Ovary (tissue), 10 donors: ENCODE measurements at regions of chr22 and their contacts with region 1.

Region 1: DNA sequence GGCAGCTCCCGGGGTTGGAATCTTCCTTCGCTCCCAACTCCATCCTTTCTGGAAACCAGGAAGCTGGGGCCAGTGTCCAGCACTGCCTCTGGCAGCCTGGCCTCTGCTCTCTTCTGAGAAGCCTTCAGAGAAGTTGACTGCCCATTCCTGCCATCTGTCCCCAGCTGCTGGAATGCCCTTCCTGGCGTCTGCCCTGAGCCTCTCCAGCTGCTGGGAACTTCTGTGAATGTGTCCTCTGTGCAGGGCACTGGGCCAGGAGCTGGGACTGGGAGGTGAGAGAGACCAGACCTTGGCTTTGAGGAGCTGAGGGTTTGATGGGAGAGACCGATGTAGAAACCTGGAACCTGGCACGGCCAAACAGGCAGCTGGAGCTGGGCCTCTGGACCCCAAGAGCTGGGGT is 5.9 kb upstream of the SOX10 start:
- DNase-seq: no peak
- H3K4me3 ChIP-seq: no peak overlapping the region
- H3K27ac ChIP-seq: no peak overlapping the region
- H3K4me1 ChIP-seq: no peaks in the 10 kb centered on the region
- H3K27me3 ChIP-seq: no peaks in the 10 kb centered on the region
- CTCF ChIP-seq: no peak
- EP300 ChIP-seq: no peak
- POLR2A ChIP-seq: no peak

Region 2: GRCh38 chr22:37328017-37328416 is 662.3 kb before region 1 on chr22:
- intact Hi-C with region 1: loop called in 1 of 4 experiments (anchors 5 kb)
- DNase-seq: no peak
- H3K4me3 ChIP-seq: no peak overlapping the region
- H3K27ac ChIP-seq: no peak overlapping the region
- H3K4me1 ChIP-seq: no peaks in the 10 kb centered on the region
- H3K27me3 ChIP-seq: no peaks in the 10 kb centered on the region
- CTCF ChIP-seq: no peak
- EP300 ChIP-seq: no peak
- POLR2A ChIP-seq: no peak

Region 3: DNA sequence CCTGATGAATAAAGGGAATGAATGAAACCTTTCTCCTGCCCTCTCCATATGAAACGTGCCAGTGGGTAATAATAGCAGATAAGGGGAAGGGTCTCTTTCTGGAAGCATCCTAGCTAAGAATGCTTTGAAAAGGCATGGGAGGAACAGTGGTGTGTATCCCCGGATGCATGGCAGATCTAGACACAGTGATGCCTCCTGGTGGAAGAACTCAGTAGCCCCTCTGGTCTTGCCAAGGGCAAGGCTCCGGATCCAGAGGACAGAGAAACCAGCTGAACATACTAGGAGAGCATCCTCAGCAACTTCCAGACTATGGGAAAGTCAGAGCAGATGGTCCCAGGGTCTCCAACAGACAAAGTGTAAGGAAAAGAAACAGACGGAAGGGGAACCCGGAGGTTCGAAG is 113.8 kb after region 1 on chr22:
- intact Hi-C with region 1: no loop called
- DNase-seq: no peak
- H3K4me3 ChIP-seq: no peak overlapping the region
- H3K27ac ChIP-seq: no peak overlapping the region
- H3K4me1 ChIP-seq: no peaks in the 10 kb centered on the region
- H3K27me3 ChIP-seq: no peaks in the 10 kb centered on the region
- CTCF ChIP-seq: no peak
- EP300 ChIP-seq: no peak
- POLR2A ChIP-seq: no peak